ENCODE measurements at regions of chr18 and their contacts with region 1.

Region 1: GRCh38 chr18:49510393-49511115 is 23.5 kb upstream of the C18orf32 start:
- DNase-seq: no peak
- H3K4me3 ChIP-seq: no peak overlapping the region
- H3K27ac ChIP-seq: no peak overlapping the region
- H3K27me3 ChIP-seq: peaks cover 5% of the 10 kb centered on the region
- CTCF ChIP-seq: peak; percentile 91

Region 2: GRCh38 chr18:49524349-49524748 is 13.8 kb after region 1 on chr18:
- CTCF ChIA-PET with region 1: interaction called, 21 read pairs
- POLR2A ChIA-PET with region 1: no interaction called
- DNase-seq: no peak
- H3K4me3 ChIP-seq: no peak overlapping the region
- H3K27ac ChIP-seq: no peak overlapping the region
- H3K27me3 ChIP-seq: peaks cover 4% of the 10 kb centered on the region
- CTCF ChIP-seq: no peak

Region 3: DNA sequence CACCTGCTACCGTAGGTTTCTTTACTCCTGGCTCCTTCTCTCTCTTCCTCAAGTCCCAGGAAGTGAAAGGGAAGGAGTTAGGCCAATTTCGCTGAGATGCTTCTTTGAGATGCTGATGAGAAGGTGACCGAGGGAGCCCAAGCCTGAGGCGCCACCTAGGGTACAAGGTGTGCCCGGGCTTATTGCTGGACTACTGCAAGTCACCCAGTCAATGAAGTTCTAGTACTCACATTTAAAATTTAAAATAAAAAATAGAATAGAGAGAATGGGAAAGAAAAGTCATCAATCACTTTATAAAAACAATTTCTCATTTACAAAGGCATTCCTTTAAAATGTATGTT is 257.5 kb after region 1 on chr18:
- CTCF ChIA-PET with region 1: interaction called, 16 read pairs
- POLR2A ChIA-PET with region 1: no interaction called
- DNase-seq: peak; percentile 43
- H3K4me3 ChIP-seq: no peak overlapping the region
- H3K27ac ChIP-seq: no peak overlapping the region
- H3K27me3 ChIP-seq: no peaks in the 10 kb centered on the region
- CTCF ChIP-seq: peak; percentile 85

Region 4: DNA sequence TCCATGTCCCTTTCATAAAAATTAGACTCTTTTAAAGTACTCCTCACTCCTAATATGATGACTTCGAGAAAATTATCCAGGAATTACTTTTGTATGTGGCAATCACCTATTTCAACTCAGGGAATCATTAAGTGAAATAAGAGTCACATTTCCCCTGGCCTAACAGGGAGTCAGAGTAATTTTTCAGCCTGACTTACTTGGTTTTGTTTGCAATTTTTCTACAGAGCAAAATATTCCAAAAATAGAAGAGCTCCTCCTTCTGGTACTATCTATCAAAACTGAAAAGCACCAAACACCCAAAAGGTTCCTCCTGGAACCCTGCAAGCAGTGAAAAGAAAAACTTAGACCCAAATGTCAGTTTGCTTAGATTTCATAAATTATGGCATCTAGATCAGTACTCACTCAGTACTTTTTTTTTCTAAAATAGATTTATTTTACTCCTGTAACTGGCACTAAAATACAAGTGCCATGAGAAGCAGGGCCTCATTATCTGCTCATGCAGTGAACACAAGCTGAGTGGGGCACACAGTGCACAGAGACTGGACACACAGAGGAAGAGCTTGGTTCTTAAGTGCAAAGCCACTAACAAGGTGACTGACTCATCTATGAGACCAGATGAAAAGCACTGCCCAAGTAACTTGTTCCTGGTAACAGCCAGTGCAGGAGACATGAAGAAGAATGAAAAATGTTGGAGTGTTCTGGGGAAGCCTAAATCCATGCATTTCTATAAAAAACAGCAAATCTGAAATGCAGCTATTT is 274.1 kb after region 1 on chr18:
- CTCF ChIA-PET with region 1: interaction called, 26 read pairs
- POLR2A ChIA-PET with region 1: no interaction called
- DNase-seq: no peak
- H3K4me3 ChIP-seq: no peak overlapping the region
- H3K27ac ChIP-seq: no peak overlapping the region
- H3K27me3 ChIP-seq: no peaks in the 10 kb centered on the region
- CTCF ChIP-seq: peak; percentile 42

Region 5: GRCh38 chr18:49858309-49859020 is 347.9 kb after region 1 on chr18:
- CTCF ChIA-PET with region 1: interaction called, 178 read pairs
- POLR2A ChIA-PET with region 1: interaction called, 3 read pairs
- DNase-seq: peak; percentile 38
- H3K4me3 ChIP-seq: no peak overlapping the region
- H3K27ac ChIP-seq: no peak overlapping the region
- H3K27me3 ChIP-seq: peaks cover 16% of the 10 kb centered on the region
- CTCF ChIP-seq: peak; percentile 98

Measured in AG04450 (cell line).